HEK293T (cell line): ENCODE measurements at regions of chr1 and their contacts with region 1.

Region 1: GRCh38 chr1:92831762-92832536 is at the start of gene RPL5:
- DNase-seq: peak; percentile 99

Region 2: DNA sequence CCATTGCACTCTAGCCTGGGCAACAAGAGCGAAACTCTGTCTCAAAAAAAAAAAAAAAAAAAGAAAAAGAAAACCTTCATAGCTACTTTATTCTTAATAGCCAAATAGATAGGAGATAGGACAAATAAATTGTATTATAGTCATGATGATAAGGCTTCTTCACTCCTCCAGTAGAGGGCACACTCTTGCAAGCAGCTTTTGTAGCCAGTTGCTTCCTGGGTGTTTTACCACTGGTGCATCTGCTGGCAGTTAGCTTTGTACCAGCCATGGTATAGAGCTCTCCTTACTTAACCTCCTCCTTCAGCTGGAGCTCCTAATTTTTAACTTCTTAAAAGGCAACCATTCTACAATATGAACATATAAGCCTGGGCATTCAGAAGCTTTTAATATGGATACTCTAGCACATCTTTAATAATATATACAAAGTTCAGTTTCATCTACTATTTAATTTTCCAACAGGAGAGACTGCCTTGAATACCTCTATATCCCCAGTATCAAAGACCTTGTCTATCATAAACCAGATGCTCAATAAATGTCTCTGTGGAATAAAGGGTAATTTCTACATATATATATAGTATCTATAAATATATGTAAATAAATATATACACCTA is 82.8 kb before region 1 on chr1:
- CTCF ChIA-PET with region 1: interaction called, 11 read pairs
- POLR2A ChIA-PET with region 1: interaction called, 17 read pairs
- DNase-seq: peak; percentile 70

Region 3: DNA sequence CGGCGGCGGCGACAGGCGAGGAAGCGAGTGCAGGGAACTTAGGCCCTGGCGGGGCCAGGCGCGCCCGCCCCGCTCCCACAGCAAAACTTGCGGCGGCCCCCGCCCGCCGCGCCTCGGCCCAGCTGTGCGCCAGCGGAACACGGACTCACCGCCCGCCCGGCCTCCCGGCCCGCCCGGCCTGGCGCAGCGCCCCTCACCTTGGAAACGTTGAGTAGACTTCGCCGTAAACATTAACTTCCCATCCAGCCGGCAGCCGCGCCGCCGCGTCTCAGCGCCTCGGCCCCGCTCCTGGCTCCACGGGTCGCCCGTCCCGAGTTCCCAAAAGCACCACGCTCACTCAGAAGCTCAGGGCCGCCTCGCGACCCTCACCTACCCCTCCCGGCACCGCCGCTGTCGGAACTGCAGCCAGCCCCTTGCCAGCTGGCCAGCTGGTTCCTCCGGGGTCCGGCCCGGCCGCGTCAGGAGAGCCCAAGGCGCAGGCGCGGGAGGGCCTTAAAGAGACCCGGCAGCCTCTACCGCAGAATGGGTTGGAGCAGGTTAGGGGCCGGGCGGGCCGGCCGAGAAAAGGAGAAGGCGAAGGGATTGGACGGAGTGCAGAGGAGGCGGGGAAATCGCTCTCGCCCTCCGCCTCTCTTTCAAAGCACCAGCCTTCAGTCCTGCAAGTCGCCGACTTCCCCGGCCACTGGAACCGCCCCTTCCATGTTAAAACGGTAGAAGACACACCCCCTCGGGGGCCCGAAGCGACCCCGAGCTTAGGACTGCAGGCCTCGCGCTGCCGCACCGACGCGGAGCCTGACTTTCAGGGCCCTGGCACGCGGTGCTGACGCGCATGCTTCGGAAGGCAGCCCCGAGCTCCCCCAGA is 47.1 kb before region 1 on chr1 and contains the start of gene EVI5:
- CTCF ChIA-PET with region 1: no interaction called
- POLR2A ChIA-PET with region 1: interaction called, 15 read pairs
- DNase-seq: peak; percentile 94

Region 4: GRCh38 chr1:92843429-92844352 is 11.7 kb after region 1 on chr1:
- CTCF ChIA-PET with region 1: no interaction called
- POLR2A ChIA-PET with region 1: interaction called, 27 read pairs
- DNase-seq: no peak